ENCODE measurements at regions of chr7 and their contacts with region 1.

Region 1: DNA sequence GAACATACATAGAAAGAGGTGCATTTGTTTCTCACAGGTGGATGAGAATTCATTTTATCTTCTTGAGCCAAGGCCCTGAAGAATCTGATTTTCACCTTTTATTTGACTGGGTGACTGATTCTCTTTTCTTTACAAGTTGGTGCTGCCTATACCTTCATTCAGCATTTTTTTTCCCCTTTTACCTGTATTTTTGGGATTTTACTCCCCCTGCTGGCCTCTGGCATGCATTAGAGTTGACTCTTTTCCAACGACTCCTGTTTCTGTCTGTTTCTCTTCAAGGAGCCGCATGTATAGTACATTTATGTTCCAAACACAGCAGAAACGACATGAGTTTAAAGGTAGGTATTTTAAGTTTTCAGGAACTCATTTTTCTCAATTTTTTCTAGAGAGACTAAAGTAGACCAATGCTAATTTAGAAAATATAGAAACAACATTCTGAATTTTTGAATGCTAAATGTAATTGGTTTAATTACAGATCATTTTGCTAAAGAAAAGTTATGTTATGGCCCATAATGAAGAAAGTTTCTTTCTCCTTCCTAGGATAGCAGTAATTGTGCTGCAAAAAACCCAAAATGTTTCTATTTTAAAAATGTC is 149.8 kb upstream of the HDAC9 start:
- DNase-seq: peak; percentile 71
- H3K4me3 Mint-ChIP-seq: no peak overlapping the region
- H3K27ac Mint-ChIP-seq: no peak overlapping the region
- H3K4me1 Mint-ChIP-seq: no peaks in the 10 kb centered on the region
- H3K27me3 Mint-ChIP-seq: peaks cover 10% of the 10 kb centered on the region

Region 2: GRCh38 chr7:16891338-16891737 is 1454.4 kb before region 1 on chr7:
- intact Hi-C with region 1: loop called (anchors 5 kb)
- DNase-seq: peak; percentile 68
- H3K4me3 Mint-ChIP-seq: no peak overlapping the region
- H3K27ac Mint-ChIP-seq: no peak overlapping the region
- H3K4me1 Mint-ChIP-seq: no peaks in the 10 kb centered on the region
- H3K27me3 Mint-ChIP-seq: peaks cover 4% of the 10 kb centered on the region

Region 3: DNA sequence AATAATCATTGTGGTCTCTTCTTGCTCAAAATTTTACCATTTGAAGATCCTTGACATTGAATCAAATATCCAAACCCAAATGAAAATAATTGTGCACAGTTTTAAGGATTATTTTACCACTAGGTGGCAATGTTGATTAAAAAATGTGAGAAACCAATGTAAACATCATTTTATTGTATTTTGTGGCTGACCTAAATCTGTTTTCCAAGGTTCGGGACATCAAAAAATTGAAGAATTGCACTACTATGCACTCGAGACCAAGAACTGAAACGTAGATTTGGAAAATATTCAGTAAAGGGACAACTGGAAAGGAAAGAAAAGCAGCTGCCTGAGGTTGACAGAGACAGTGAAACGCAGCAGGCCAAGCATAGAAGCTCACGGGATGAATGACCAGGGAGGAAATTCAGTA is 664.8 kb before region 1 on chr7:
- intact Hi-C with region 1: loop called (anchors 1 kb)
- DNase-seq: no peak
- H3K4me3 Mint-ChIP-seq: no peak overlapping the region
- H3K27ac Mint-ChIP-seq: no peak overlapping the region
- H3K4me1 Mint-ChIP-seq: no peaks in the 10 kb centered on the region
- H3K27me3 Mint-ChIP-seq: peaks cover 8% of the 10 kb centered on the region

Region 4: GRCh38 chr7:18262058-18262457 is 83.7 kb before region 1 on chr7:
- intact Hi-C with region 1: no loop called
- DNase-seq: no peak
- H3K4me3 Mint-ChIP-seq: no peak overlapping the region
- H3K27ac Mint-ChIP-seq: no peak overlapping the region
- H3K4me1 Mint-ChIP-seq: no peaks in the 10 kb centered on the region
- H3K27me3 Mint-ChIP-seq: no peaks in the 10 kb centered on the region

Measured in activated CD4-positive, alpha-beta T cell treated with anti-CD3 and anti-CD28 coated beads, Interleukin-2, amount 10 ng/mL, durations not matched to agents 24 days and 14 days (primary cell).